ENCODE measurements at regions of chr2 and their contacts with region 1.

Region 1: GRCh38 chr2:198309673-198310280 is 505.4 kb downstream of the PLCL1 start:
- DNase-seq: peak; percentile 43
- CTCF ChIP-seq: peak; percentile 64

Region 2: DNA sequence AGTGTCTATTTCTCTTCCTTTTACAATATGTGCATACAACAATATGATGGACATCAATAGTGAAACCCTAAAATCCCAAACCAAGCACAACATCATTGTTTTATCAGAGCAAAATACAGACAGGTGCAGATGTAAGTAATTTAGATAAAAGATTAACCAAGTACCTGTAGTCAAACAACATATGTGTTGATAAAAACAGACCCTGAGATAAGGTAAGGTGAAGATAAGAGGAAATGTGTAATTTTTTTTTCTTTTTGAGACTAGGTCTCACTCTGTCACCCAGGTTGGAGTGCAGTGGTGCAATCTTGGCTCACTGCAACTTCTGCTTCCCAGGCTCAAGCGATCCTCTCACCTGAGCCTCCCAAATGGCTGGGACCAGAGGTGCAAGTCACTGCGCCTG is 84.4 kb after region 1 on chr2:
- in situ Hi-C with region 1: no loop called
- DNase-seq: no peak
- CTCF ChIP-seq: no peak

Region 3: DNA sequence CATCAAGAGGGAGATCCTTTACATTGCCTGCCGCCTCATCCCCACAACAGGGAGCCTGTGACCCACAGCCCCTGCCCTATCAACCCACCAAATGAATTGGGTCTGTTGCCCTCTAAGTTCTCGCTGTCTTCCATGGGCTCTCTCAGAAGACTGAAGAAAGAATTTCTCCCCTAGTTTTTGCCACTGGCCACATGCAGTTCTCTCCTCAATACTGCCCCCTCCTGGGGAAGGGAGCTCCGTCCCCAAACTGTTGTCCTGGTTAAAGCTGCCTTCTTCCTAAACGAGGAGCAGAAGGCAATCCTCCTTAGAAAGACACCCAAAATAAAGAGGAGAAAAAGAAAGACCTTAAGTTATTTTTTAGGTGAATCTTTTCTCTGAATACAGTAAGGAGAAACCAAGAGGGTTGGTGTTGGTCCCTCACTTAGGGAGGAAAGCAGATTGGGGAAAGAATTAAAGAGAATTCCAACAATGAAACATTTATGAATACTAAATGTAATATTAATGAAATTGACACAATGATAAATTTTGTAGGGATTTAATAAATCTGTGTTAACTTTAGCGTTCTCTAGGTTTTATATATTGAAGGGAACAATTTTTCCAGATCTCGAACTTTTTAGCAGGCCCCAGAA is 1179.1 kb after region 1 on chr2:
- in situ Hi-C with region 1: loop called (anchors 25 kb)
- DNase-seq: peak; percentile 65
- CTCF ChIP-seq: peak; percentile 61

Region 4: GRCh38 chr2:199739413-199740110 is 1429.8 kb after region 1 on chr2:
- in situ Hi-C with region 1: loop called (anchors 25 kb)
- DNase-seq: peak; percentile 47
- CTCF ChIP-seq: peak; percentile 88